WTC11 (cell line): ENCODE measurements at regions of chr4 and their contacts with region 1.

Region 1: GRCh38 chr4:70734168-70734954 is 12.6 kb downstream of the RUFY3 start:
- DNase-seq: no peak
- ATAC-seq: no peak
- H3K4me3 Mint-ChIP-seq: no peak overlapping the region
- H3K27ac Mint-ChIP-seq: peak overlapping the region; percentile 14
- H3K4me1 Mint-ChIP-seq: no peaks in the 10 kb centered on the region
- H3K27me3 Mint-ChIP-seq: no peaks in the 10 kb centered on the region
- CTCF ChIP-seq: no peak

Region 2: GRCh38 chr4:70704331-70705145 is 29.8 kb before region 1 on chr4:
- CTCF ChIA-PET with region 1: interaction called, 15 read pairs
- POLR2A ChIA-PET with region 1: no interaction called
- DNase-seq: peak; percentile 92
- ATAC-seq: peak; percentile 87
- H3K4me3 Mint-ChIP-seq: peak overlapping the region; percentile 88
- H3K27ac Mint-ChIP-seq: peak overlapping the region; percentile 98
- H3K4me1 Mint-ChIP-seq: peaks cover 18% of the 10 kb centered on the region
- H3K27me3 Mint-ChIP-seq: peaks cover 3% of the 10 kb centered on the region; the same call in 1 of the 2 replicates
- CTCF ChIP-seq: no peak

Region 3: GRCh38 chr4:70721747-70722146 is 12.6 kb before region 1 on chr4 and contains the start of gene RUFY3:
- CTCF ChIA-PET with region 1: interaction called, 23 read pairs
- POLR2A ChIA-PET with region 1: interaction called, 6 read pairs
- DNase-seq: no peak
- ATAC-seq: peak; percentile 28
- H3K4me3 Mint-ChIP-seq: no peak within 1 kb of the TSS
- H3K27ac Mint-ChIP-seq: peak within 1 kb of the TSS; percentile 28
- H3K4me1 Mint-ChIP-seq: peaks cover 16% of the 10 kb centered on the region
- H3K27me3 Mint-ChIP-seq: no peaks in the 10 kb centered on the region
- CTCF ChIP-seq: no peak
- total RNA-seq, gene RUFY3: 49.0 to 52.3 TPM (median 51.4 TPM) in 3 replicates

Region 4: GRCh38 chr4:70778888-70779422 is 44.6 kb after region 1 on chr4:
- CTCF ChIA-PET with region 1: no interaction called
- POLR2A ChIA-PET with region 1: no interaction called
- DNase-seq: no peak
- ATAC-seq: no peak
- H3K4me3 Mint-ChIP-seq: no peak overlapping the region
- H3K27ac Mint-ChIP-seq: no peak overlapping the region
- H3K4me1 Mint-ChIP-seq: no peaks in the 10 kb centered on the region
- H3K27me3 Mint-ChIP-seq: no peaks in the 10 kb centered on the region
- CTCF ChIP-seq: no peak

Region 5: GRCh38 chr4:70793626-70794025 is 59.3 kb after region 1 on chr4:
- CTCF ChIA-PET with region 1: no interaction called
- POLR2A ChIA-PET with region 1: no interaction called
- DNase-seq: no peak
- ATAC-seq: no peak
- H3K4me3 Mint-ChIP-seq: no peak overlapping the region
- H3K27ac Mint-ChIP-seq: no peak overlapping the region
- H3K4me1 Mint-ChIP-seq: no peaks in the 10 kb centered on the region
- H3K27me3 Mint-ChIP-seq: no peaks in the 10 kb centered on the region
- CTCF ChIP-seq: no peak

Region 6: DNA sequence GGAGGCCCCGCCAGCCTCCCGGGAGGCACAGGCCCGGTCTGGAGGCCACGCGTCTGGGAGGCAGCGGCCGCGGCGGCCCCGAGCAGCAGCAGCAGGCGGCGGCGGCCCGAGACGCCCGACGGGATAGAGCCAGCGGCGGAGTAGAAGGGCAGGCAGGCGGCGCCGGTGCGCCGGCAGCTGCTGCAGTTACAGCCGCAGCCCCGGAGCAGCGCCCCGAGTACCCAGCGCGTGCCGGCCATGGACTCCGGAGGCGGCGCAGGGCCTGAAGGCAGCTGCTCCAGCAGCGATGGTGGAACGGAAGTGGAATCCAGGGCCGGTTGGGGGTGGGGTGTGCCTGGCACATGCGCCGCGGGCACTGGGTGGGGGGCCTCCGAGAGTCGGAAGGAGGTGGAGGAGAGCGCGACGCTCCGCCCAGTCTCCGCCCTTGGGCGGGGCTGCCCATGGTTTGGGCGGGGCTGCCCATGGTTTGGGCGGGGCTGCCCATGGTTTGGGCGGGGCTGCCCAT is 105.3 kb after region 1 on chr4 and contains the start of gene GRSF1:
- CTCF ChIA-PET with region 1: no interaction called
- POLR2A ChIA-PET with region 1: no interaction called
- DNase-seq: peak; percentile 94
- ATAC-seq: peak; percentile 92
- H3K4me3 Mint-ChIP-seq: peak within 1 kb of the TSS; percentile 94
- H3K27ac Mint-ChIP-seq: peak within 1 kb of the TSS; percentile 91
- H3K4me1 Mint-ChIP-seq: peaks cover 20% of the 10 kb centered on the region
- H3K27me3 Mint-ChIP-seq: no peaks in the 10 kb centered on the region
- CTCF ChIP-seq: no peak
- total RNA-seq, gene GRSF1: 84.6 to 98.5 TPM (median 84.7 TPM) in 3 replicates